Naive thymus-derived CD4-positive, alpha-beta T cell (primary cell): ENCODE measurements at regions of chr3 and their contacts with region 1.

Region 1: GRCh38 chr3:32992322-32992692 is 40.9 kb downstream of the CCR4 start:
- DNase-seq: no peak
- ATAC-seq: no peak
- H3K4me3 ChIP-seq: no peak overlapping the region
- H3K4me3 Mint-ChIP-seq: peak overlapping the region in 1 of 10 donors; percentile 60
- H3K27ac ChIP-seq: no peak overlapping the region
- H3K27ac Mint-ChIP-seq: peak overlapping the region in 1 of 9 donors; percentile 88
- H3K4me1 ChIP-seq: peaks cover 0 to 29% of the 10 kb centered on the region in 2 donors
- H3K4me1 Mint-ChIP-seq: peaks cover 2 to 48% (median 22%) of the 10 kb centered on the region in 7 donors
- H3K27me3 ChIP-seq: no peaks in the 10 kb centered on the region
- H3K27me3 Mint-ChIP-seq: no peaks in the 10 kb centered on the region

Region 2: DNA sequence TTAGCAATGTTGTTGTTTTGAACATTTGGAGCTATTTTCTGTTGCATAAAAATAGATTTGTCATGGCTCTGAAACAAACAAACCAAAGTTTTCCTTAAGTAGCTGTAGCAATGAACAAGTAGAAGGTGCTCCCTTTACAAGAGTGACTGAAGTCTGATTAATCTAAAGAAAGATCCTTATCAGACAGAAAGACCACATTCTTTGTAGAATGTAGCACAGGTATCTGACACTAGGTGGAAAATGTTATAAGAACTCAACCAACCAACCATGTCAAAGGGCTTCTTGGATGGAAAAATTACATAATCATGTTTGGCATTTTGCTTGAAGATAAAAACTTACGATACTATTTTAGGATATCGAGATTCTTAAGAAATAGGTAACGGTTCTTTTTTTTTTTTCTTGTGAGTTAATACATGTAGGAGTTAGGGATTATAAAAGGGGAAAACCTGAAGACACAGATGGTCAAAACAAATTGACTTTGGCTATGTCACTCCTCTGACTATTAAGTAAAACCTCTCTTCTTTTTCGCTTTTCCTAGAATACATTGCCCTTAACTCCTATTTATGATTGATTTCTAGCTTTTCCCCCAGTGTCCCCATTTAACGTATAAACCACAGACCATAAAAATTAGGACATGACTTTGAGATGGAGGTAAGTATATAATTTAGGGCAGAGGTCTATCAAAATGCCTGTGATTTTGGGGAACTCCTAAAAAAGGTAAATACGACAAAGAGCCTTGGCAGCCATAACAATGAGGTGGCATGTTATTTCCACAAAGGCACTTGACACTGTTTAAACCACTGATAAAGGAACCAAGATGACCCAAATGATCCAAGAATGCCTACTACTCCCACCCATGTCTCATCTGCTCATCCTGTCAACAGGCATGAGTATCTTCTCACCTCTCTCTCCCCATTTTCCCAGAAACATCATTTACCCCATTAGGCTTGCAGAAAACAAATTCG is 31.1 kb after region 1 on chr3:
- CTCF ChIA-PET with region 1: no interaction called
- POLR2A ChIA-PET with region 1: no interaction called
- intact Hi-C with region 1: loop called in 1 of 2 experiments (anchors 1 kb)
- DNase-seq: peak in 6 of 9 donors; percentile 5 to 34 (median 26)
- ATAC-seq: peak; percentile 76
- H3K4me3 ChIP-seq: no peak overlapping the region
- H3K4me3 Mint-ChIP-seq: peak overlapping the region in 4 of 10 donors; percentile 1 to 37 (median 20)
- H3K27ac ChIP-seq: no peak overlapping the region
- H3K27ac Mint-ChIP-seq: peak overlapping the region in 5 of 9 donors; percentile 13 to 56 (median 44)
- H3K4me1 ChIP-seq: peaks cover 13 to 15% of the 10 kb centered on the region in 2 donors
- H3K4me1 Mint-ChIP-seq: peaks cover 15 to 54% (median 40%) of the 10 kb centered on the region in 7 donors
- H3K27me3 ChIP-seq: no peaks in the 10 kb centered on the region
- H3K27me3 Mint-ChIP-seq: no peaks in the 10 kb centered on the region